GM10248 (cell line): ENCODE measurements at regions of chr2 and their contacts with region 1.

Region 1: DNA sequence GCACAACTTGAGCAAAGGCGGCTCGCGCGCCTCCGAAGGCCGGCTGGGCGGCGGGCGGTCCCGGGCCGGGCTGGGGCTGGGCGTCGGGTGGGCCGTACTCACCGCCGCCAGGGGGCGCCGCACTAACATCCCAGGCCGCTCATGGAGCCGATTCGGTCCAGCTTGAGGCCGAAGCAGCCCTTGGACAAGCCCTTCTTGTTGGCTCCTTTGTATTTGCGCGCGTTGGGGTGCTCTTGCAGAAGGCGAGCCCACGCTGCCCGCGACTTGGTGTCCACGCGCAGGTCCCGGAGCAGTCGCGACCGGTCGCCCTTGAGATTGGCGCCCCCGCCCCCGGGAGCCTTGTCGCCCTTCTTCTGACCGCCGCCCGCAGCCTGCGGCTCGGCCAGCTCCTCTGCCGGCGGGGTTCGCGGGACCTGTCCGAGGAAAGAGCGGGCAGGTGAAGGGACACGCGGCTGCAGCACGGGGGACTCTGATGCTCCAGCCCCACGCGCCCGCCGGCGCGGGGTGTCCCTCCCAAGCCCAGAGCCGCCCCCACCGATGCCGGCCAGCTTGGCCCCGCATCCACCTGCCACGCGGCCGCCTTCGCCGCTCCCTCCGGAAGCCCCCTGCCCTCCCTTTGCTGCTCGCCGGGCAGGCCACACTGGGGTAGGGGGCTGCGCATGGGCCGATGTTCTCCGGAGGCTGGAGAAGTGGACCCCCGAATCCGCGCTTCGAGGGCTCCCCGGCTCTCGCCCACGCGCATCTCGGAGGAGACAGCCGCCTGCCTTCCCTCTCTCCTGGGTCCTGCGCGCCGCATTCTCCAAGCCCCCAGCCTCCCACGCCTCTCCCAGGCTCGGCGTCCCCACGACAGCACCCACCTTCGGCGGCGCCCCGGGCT is 655 bp downstream of the NPPC start:
- DNase-seq: peak; percentile 88
- CTCF ChIP-seq: peak; percentile 70

Region 2: DNA sequence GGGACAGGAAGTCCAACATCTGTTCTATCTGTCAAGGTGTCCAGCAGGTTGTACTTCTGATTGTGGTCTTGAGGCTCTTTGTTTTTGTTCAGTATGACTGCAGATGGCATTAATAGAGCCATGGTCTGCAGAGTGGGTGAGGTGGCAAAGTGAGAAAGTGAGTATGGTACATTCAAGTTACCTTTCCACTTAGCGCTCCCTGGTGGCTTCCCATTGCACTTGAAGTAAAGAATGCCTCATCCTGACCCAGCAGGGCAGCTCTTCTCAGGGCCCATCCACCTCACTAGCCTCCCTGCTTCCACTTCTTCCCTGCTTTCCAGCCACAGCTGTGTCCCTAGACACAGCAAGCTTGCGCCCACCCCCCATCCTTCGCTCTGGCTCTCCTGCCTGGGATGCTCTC is 305.0 kb after region 1 on chr2:
- CTCF ChIA-PET with region 1: interaction called, 14 read pairs
- POLR2A ChIA-PET with region 1: no interaction called
- DNase-seq: no peak
- CTCF ChIP-seq: peak; percentile 34